CD8-positive, alpha-beta memory T cell (primary cell): ENCODE measurements at regions of chr5 and their contacts with region 1.

Region 1: DNA sequence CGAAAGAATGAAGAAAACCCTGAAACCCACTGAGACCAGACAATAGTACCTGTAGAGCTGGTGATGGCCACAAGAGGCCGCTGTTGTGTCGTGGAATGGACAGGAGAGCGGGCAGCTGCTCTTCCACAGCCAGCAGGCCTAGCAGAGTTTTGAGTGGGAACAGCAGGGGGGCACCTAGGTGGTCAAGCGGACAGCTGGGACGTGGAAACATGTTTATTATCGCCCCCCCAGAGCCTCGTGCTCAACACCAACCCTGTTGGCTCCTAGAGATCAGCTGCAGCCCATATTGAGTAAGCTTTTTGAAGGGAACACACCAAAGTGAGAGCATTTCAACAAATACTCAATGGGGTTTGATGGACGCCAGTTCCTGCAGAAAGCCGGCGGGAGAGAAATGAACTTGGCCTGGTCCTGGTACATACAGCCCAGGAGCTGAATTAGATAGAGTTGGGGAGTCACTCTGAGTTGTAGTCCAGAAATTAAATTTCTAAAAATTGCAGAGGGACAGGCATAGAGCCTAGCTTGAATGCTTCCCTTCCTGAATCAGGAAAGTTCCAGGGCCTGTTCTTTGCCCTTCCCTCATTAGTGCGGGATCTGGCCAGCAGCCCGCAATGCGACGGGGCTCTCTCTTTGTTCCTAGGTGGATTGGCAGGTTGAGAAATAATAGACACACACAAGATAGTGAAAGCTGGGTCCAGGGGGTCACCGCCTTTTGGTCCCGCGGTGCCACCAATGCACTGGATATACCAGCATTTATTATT is 33.8 kb downstream of the MFAP3 start:
- DNase-seq: peak; percentile 66 to 85 (median 75)
- H3K4me3 ChIP-seq: no peak overlapping the region
- H3K4me3 Mint-ChIP-seq: peak overlapping the region in 3 of 7 donors; percentile 0 to 55 (median 51)
- H3K27ac ChIP-seq: no peak overlapping the region
- H3K27ac Mint-ChIP-seq: peak overlapping the region in 7 of 8 donors; percentile 2 to 89 (median 77)
- H3K4me1 ChIP-seq: peaks cover 16% of the 10 kb centered on the region
- H3K4me1 Mint-ChIP-seq: peaks cover 12 to 29% (median 21%) of the 10 kb centered on the region in 3 donors
- H3K27me3 ChIP-seq: no peaks in the 10 kb centered on the region
- H3K27me3 Mint-ChIP-seq: peaks cover 0 to 3% of the 10 kb centered on the region in 2 donors

Region 2: DNA sequence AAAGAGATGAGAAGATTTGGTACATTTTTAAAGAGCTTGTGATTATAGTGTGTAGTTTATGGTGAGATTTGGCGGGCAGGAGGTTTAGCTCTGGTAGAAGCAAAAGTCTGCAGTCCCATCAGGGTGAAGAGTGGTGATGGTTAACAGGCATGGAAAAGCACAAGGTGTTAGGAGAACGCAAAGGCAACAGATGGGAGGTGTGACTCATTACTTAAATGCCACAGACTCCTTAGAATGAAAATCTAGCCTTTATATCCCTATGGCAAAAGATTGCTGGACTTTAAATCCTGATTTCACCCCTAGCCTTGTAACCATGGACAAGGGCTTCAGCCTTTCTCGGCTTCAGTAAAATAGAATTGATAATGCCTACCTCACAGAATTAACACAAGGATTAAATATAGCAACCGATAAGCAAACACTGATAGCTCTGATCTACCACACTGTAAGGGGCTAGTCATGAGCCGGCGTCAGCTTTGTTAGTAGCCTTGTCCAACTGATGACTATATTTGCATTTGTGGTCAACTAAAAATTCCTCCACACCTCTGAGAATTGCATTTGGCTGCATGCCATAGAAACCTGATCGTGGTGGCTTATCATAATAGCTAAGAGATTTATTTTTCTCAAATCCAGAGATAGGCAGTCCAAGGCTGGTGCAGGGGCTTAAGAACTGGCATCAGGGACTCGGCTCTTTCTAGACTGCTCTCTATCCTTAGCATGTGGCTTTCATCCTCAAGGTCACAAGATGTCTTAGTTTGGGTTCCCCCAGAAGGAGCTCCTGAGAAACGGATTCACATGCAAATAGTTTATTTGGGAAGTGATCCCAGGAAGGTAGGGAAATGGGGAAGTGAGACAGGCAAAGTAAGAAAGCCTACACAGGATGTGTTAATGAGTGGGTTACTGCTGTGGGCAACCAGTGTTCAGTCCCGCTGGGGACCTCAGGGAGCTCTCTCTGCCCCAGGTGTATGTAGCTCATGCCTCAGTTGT is 14.2 kb before region 1 on chr5:
- CTCF ChIA-PET with region 1: interaction called, 22 read pairs
- POLR2A ChIA-PET with region 1: no interaction called
- DNase-seq: no peak
- H3K4me3 ChIP-seq: no peak overlapping the region
- H3K4me3 Mint-ChIP-seq: peak overlapping the region in 6 of 7 donors; percentile 29 to 76 (median 53)
- H3K27ac ChIP-seq: no peak overlapping the region
- H3K27ac Mint-ChIP-seq: peak overlapping the region; percentile 64 to 94 (median 90)
- H3K4me1 ChIP-seq: peaks cover 6% of the 10 kb centered on the region
- H3K4me1 Mint-ChIP-seq: peaks cover 18 to 27% (median 27%) of the 10 kb centered on the region in 3 donors
- H3K27me3 ChIP-seq: no peaks in the 10 kb centered on the region
- H3K27me3 Mint-ChIP-seq: no peaks in the 10 kb centered on the region

Region 3: GRCh38 chr5:154189819-154190594 is 117.4 kb after region 1 on chr5:
- CTCF ChIA-PET with region 1: interaction called, 23 read pairs
- POLR2A ChIA-PET with region 1: interaction called, 3 read pairs
- DNase-seq: peak; percentile 74 to 86 (median 80)
- H3K4me3 ChIP-seq: peak overlapping the region; percentile 60
- H3K4me3 Mint-ChIP-seq: peak overlapping the region; percentile 84 to 95 (median 90)
- H3K27ac ChIP-seq: peak overlapping the region; percentile 76
- H3K27ac Mint-ChIP-seq: peak overlapping the region; percentile 40 to 93 (median 84)
- H3K4me1 ChIP-seq: peaks cover 29% of the 10 kb centered on the region
- H3K4me1 Mint-ChIP-seq: peaks cover 43 to 54% (median 50%) of the 10 kb centered on the region in 3 donors
- H3K27me3 ChIP-seq: no peaks in the 10 kb centered on the region
- H3K27me3 Mint-ChIP-seq: peaks cover 0 to 3% of the 10 kb centered on the region in 2 donors

Region 4: DNA sequence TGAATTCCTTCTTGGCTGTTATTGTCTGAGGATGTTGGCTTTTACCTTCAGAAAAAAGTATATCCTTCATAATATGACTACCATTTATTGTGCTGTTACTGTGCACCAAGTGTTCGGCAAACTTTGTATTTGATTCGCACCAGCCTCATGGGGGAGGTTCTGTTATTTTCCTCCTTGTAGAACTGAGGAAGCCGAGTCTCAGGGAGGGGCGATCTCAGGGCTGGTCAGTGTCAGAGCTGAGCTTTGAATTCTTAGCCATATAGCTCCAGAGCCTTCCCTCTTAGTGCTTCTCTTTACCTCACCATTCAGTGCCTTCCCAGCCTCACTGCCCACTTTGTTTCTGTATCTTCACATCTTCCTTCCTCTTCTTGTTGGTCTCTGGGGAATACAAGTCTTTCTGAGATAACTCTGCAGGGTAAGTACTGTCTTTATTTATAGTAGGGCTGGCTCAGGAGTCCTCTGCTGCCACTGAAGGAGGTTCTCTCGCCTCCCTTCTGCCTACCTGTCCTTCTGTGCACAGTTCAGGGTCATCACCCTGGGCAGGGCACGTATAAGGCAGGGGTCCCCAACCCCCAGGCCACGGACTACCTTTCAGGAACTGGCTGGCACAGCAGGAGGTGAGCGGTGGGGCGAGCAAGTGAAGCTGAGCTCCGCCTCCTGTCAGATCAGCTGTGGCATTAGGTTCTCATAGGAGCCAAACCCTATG is 166.3 kb after region 1 on chr5:
- CTCF ChIA-PET with region 1: interaction called, 15 read pairs
- POLR2A ChIA-PET with region 1: no interaction called
- DNase-seq: no peak
- H3K4me3 ChIP-seq: no peak overlapping the region
- H3K4me3 Mint-ChIP-seq: no peak overlapping the region
- H3K27ac ChIP-seq: no peak overlapping the region
- H3K27ac Mint-ChIP-seq: peak overlapping the region in 1 of 8 donors; percentile 17
- H3K4me1 ChIP-seq: no peaks in the 10 kb centered on the region
- H3K4me1 Mint-ChIP-seq: peaks cover 42 to 86% (median 52%) of the 10 kb centered on the region in 3 donors
- H3K27me3 ChIP-seq: no peaks in the 10 kb centered on the region
- H3K27me3 Mint-ChIP-seq: no peaks in the 10 kb centered on the region

Region 5: DNA sequence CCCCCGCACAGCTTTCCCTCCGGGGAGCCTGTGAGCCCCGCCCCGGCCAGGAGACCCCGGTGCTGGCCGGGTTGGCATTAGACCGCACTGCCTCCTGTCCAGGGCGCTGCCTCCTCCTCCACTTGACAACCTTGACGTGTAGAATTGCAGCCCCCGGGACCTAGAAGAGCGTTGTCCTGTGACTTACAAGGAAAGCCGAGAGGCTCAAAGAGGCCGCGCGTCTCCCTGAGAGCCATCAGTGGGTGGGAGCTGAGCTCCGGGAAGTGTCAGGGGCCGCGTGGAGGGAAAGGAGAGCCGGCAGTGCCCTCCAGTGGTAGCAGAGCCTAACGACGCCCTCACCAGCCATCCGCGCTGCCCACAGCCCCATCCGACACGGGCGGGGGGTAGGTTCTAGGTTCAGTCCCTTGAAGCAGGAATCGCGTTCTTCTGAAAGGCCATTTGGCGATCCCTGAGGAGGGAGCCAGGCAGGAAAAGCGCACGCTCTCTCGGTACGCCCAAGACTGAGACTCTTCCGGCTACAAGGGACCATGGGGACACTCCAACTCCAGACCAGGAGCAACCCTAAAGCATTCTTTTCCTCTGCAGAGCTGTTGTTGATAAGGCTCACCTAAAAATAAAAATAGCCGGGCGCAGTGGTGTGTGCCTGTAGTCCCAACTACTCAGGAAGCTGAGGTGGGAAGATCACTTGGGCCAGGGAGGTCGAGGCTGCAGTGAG is 332.6 kb after region 1 on chr5:
- CTCF ChIA-PET with region 1: interaction called, 82 read pairs
- POLR2A ChIA-PET with region 1: interaction called, 5 read pairs
- DNase-seq: peak; percentile 49 to 75 (median 55)
- H3K4me3 ChIP-seq: no peak overlapping the region
- H3K4me3 Mint-ChIP-seq: peak overlapping the region in 6 of 7 donors; percentile 28 to 74 (median 58)
- H3K27ac ChIP-seq: no peak overlapping the region
- H3K27ac Mint-ChIP-seq: peak overlapping the region in 4 of 8 donors; percentile 17 to 31 (median 26)
- H3K4me1 ChIP-seq: peaks cover 8% of the 10 kb centered on the region
- H3K4me1 Mint-ChIP-seq: peaks cover 8 to 19% (median 16%) of the 10 kb centered on the region in 3 donors
- H3K27me3 ChIP-seq: no peaks in the 10 kb centered on the region
- H3K27me3 Mint-ChIP-seq: no peaks in the 10 kb centered on the region